Naive thymus-derived CD4-positive, alpha-beta T cell (primary cell): ENCODE measurements at regions of chr14 and their contacts with region 1.

Region 1: GRCh38 chr14:91510174-91511042 is at the start of gene PPP4R3A:
- DNase-seq: peak; percentile 86 to 96 (median 95)
- ATAC-seq: peak; percentile 92
- H3K4me3 ChIP-seq: peak within 1 kb of the TSS; percentile 62
- H3K4me3 Mint-ChIP-seq: peak within 1 kb of the TSS; percentile 93 to 100 (median 98)
- H3K27ac ChIP-seq: peak within 1 kb of the TSS; percentile 99
- H3K27ac Mint-ChIP-seq: peak within 1 kb of the TSS; percentile 100
- H3K4me1 ChIP-seq: peaks cover 14 to 22% of the 10 kb centered on the region in 2 donors
- H3K4me1 Mint-ChIP-seq: peaks cover 15 to 38% (median 32%) of the 10 kb centered on the region in 7 donors
- H3K27me3 ChIP-seq: no peaks in the 10 kb centered on the region
- H3K27me3 Mint-ChIP-seq: no peaks in the 10 kb centered on the region
- total RNA-seq, gene PPP4R3A: 129 to 214 (median 167) TPM

Region 2: DNA sequence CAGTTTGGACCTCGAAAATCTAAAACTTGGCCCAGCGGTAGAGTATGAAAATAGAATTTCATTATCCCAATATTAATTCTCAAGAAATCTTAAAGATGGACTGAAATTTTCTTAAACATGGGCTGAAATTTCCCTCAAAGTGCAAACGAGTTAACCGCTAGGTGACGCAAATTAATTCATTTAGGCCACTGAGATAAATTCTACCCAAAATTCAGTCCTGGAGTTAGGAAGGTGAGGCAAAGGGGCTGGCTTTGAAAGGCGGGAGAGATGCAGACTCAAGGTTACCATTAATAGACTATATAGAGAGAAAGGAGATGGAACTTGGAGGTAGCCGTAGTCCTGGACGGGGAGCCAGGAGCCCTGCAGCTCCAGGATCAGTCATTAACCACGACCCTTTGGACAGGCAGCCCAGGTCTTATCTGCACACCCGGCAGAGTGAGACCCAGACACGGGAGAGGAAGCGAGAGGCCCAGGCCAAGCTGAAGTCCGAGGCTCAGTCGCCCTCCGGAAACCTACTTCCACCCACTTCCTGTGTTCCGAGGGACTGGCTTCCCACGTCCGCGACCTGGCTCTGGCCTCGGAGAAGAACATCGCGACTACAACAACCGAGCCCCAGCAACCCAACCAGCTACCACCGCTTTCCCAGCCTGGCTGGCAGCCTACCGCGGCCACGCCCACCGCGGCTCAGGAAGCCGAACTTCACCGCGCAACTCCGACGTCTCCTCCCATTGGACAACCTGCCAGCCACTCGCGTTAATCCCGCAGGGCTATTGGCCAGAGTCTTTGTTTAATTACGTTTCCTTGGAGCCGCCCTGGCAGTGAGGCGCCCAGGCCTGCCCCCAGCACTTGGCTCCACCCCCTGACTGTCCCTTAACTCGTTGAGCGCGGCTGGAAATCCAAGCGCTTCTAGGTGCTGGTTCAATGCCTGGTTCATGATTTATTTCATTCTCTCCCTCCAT is 1556.1 kb before region 1 on chr14 and contains the start of gene EFCAB11:
- CTCF ChIA-PET with region 1: no interaction called
- POLR2A ChIA-PET with region 1: no interaction called
- intact Hi-C with region 1: loop called in 1 of 2 experiments (anchors 10 kb)
- DNase-seq: peak; percentile 80 to 98 (median 97)
- ATAC-seq: peak; percentile 90
- H3K4me3 ChIP-seq: peak within 1 kb of the TSS; percentile 72
- H3K4me3 Mint-ChIP-seq: peak within 1 kb of the TSS; percentile 74 to 98 (median 94)
- H3K27ac ChIP-seq: peak within 1 kb of the TSS; percentile 94
- H3K27ac Mint-ChIP-seq: peak within 1 kb of the TSS; percentile 82 to 98 (median 91)
- H3K4me1 ChIP-seq: peaks cover 16 to 21% of the 10 kb centered on the region in 2 donors
- H3K4me1 Mint-ChIP-seq: peaks cover 21 to 54% (median 43%) of the 10 kb centered on the region in 7 donors
- H3K27me3 ChIP-seq: no peaks in the 10 kb centered on the region
- H3K27me3 Mint-ChIP-seq: no peaks in the 10 kb centered on the region
- total RNA-seq, gene EFCAB11: 1.2 to 8.5 (median 1.9) TPM

Region 3: GRCh38 chr14:90758028-90758889 is 752.1 kb before region 1 on chr14:
- CTCF ChIA-PET with region 1: interaction called, 3 read pairs
- POLR2A ChIA-PET with region 1: no interaction called
- intact Hi-C with region 1: loop called in 1 of 2 experiments (anchors 1 kb)
- DNase-seq: peak; percentile 83 to 98 (median 92)
- ATAC-seq: peak; percentile 94
- H3K4me3 ChIP-seq: peak overlapping the region; percentile 79
- H3K4me3 Mint-ChIP-seq: peak overlapping the region; percentile 75 to 92 (median 86)
- H3K27ac ChIP-seq: peak overlapping the region; percentile 75
- H3K27ac Mint-ChIP-seq: peak overlapping the region; percentile 80 to 95 (median 90)
- H3K4me1 ChIP-seq: peaks cover 7 to 21% of the 10 kb centered on the region in 2 donors
- H3K4me1 Mint-ChIP-seq: peaks cover 12 to 29% (median 23%) of the 10 kb centered on the region in 7 donors
- H3K27me3 ChIP-seq: no peaks in the 10 kb centered on the region
- H3K27me3 Mint-ChIP-seq: peaks cover 0 to 33% (median 6%) of the 10 kb centered on the region in 5 donors

Region 4: DNA sequence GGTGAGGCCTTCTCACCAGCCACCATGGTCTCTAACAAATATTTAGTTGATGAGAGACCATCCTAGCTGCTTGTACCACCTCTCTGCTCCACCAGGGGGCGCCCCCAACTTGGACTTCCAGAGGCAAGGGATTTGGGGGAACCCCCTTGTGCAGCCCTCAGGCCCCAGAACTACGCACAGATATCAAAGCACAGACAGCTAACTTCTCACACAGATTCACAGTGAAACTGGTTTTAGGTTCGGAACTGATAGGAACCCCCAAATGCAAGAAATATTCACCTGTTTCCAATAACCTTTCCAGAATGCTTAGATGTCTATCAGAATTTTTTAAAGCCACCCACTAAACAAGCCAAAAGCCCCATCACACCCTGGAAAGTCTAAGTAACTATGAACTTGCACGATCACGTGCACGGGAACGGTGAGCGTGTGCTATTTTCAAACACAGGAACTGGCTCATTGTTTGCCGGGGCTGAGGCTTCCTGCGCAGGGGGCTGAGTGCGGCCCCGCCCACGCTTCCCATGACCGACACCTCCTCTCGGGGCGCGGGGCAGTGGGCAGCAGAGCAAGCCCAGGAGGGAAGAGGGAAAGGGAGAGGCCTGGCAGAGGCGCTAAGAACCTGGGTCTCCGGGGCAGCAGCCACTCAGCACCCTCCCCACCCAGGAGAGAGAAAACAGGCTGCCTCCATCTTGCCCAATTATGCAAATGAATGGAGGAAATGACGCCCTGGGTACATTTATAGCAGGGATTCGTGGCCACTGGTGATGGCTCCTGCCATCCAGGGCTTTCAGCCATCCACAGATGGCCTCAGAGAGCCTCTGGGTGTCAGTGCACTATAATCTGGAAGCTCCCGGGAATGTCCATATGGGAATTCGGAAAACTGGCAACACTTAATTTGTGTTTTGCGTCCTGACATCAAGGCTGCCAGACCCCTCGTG is 186.5 kb before region 1 on chr14:
- CTCF ChIA-PET with region 1: no interaction called
- POLR2A ChIA-PET with region 1: interaction called, 5 read pairs
- intact Hi-C with region 1: loop called in 1 of 2 experiments (anchors 5 kb)
- DNase-seq: peak; percentile 90 to 95 (median 92)
- ATAC-seq: peak; percentile 94
- H3K4me3 ChIP-seq: peak overlapping the region; percentile 39
- H3K4me3 Mint-ChIP-seq: peak overlapping the region; percentile 77 to 98 (median 84)
- H3K27ac ChIP-seq: peak overlapping the region; percentile 81
- H3K27ac Mint-ChIP-seq: peak overlapping the region; percentile 94 to 100 (median 99)
- H3K4me1 ChIP-seq: peaks cover 48 to 60% of the 10 kb centered on the region in 2 donors
- H3K4me1 Mint-ChIP-seq: peaks cover 52 to 91% (median 82%) of the 10 kb centered on the region in 7 donors
- H3K27me3 ChIP-seq: no peaks in the 10 kb centered on the region
- H3K27me3 Mint-ChIP-seq: no peaks in the 10 kb centered on the region

Region 5: DNA sequence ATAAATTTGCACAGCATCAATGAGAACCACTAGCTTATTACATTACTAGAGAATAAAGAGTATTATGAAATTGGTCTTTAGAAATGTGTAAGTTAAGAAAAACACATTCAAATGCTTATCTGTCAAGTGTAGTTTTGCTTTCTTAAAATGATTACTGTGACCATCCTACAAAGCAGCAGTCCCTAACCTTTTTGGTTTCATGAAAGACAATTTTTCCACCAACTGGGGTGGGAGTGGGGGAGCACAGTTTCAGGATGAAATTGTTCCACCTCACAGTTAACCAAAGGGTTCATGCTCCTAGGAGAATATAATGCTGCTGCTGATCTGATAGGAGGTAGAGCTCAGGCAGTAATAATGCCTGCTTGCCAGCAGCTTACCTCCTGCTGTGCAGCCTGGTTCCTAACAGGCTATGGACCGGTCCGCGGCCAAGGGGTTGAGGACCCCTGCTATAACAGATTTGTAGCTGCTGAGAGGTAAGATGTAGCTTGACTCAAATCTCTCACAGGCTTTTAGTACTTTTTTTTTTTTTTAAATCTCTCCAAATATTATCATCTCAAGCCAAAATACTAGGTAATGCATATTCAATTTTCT is 45.7 kb before region 1 on chr14:
- CTCF ChIA-PET with region 1: no interaction called
- POLR2A ChIA-PET with region 1: no interaction called
- intact Hi-C with region 1: no loop called
- DNase-seq: no peak
- ATAC-seq: no peak
- H3K4me3 ChIP-seq: no peak overlapping the region
- H3K4me3 Mint-ChIP-seq: no peak overlapping the region
- H3K27ac ChIP-seq: no peak overlapping the region
- H3K27ac Mint-ChIP-seq: peak overlapping the region in 5 of 9 donors; percentile 13 to 77 (median 56)
- H3K4me1 ChIP-seq: no peaks in the 10 kb centered on the region
- H3K4me1 Mint-ChIP-seq: peaks cover 4 to 14% (median 9%) of the 10 kb centered on the region in 7 donors
- H3K27me3 ChIP-seq: no peaks in the 10 kb centered on the region
- H3K27me3 Mint-ChIP-seq: no peaks in the 10 kb centered on the region

Region 6: DNA sequence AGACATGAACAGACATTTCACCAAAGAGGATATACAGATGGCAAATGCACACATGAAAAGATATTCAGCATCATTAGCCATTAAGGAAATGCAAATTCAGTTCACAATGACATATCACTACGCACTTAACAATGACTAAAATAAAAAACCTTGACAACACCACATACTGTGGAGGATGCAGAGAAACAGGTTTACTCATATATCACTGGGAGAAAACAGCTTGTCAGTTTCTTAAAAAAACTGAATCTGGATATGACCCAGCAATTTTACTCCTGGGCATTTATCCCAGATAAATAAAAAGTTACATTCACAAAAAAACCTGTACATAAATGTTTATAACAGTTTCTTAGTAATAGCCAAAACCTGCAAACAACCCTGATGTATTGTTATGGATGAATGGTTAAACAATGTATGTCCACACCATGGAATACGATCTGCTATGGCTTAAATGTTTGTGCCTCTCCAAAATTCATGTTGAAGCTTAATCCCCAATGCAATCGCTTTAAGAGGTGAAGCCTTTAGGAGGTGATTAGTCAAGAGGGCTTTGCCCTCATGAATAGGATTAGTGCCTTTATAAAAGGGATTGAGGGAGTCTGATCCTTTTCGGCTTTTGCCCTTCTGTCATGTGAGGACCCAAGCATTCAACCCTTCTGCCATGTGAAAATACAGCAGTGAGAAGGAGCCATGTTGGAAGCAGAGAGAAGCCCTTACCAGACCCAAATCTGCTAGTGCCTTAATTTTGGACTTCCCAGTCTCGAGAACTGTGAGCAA is 35.7 kb after region 1 on chr14:
- CTCF ChIA-PET with region 1: no interaction called
- POLR2A ChIA-PET with region 1: no interaction called
- intact Hi-C with region 1: no loop called
- DNase-seq: no peak
- ATAC-seq: no peak
- H3K4me3 ChIP-seq: no peak overlapping the region
- H3K4me3 Mint-ChIP-seq: no peak overlapping the region
- H3K27ac ChIP-seq: no peak overlapping the region
- H3K27ac Mint-ChIP-seq: no peak overlapping the region
- H3K4me1 ChIP-seq: no peaks in the 10 kb centered on the region
- H3K4me1 Mint-ChIP-seq: no peaks in the 10 kb centered on the region
- H3K27me3 ChIP-seq: no peaks in the 10 kb centered on the region
- H3K27me3 Mint-ChIP-seq: peaks cover 0 to 20% (median 6%) of the 10 kb centered on the region in 5 donors

Region 7: DNA sequence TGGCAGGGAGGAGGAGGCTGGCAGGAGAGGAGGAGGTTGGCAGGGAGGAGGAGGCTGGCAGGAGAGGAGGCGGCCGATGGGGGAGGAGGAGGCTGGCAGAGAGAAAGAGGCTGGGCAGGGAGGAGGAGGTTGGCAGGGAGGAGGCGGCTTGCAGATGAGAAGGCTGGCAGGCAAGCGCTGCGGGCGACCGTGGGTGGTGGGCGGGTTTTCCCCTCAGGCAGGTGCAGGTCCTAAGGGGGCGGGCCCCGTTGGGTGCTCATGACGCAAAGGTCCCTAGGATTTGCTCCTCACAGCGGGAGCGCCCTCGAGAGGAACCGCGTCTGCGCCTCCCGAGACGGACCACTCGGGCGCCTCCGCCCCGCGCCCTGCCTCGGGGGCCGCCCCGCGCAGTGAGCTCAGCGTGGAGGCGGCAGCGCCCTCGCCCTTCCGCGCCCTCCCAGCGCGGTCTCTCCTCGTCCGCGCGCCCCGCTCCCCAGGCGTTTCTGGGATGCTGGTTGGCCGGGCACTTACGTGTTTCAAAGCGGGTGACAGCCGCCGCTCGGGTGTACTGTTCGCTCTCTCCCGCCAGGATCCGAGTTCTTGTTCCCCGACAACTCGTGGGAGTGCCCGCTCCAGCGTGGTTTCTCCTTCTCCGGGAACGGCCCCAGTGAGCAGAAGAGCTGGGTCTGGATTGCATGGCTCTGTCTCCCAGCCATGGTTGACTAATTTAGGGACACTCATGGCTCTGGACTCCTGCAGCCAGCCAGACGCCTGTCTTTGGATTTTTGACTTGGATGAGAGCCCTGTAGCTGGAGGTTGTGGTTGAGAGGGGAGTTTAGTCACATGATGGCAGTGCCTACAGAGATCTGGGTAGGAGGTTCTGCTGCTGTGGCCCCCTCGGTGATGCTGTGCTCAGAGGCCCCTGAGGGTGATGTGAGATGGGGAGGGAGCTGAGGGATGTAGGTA is 63.8 kb after region 1 on chr14:
- CTCF ChIA-PET with region 1: no interaction called
- POLR2A ChIA-PET with region 1: no interaction called
- intact Hi-C with region 1: loop called in 1 of 2 experiments (anchors 2 kb)
- DNase-seq: peak; percentile 39 to 85 (median 48)
- ATAC-seq: peak; percentile 90
- H3K4me3 ChIP-seq: peak overlapping the region; percentile 64
- H3K4me3 Mint-ChIP-seq: peak overlapping the region; percentile 68 to 89 (median 82)
- H3K27ac ChIP-seq: no peak overlapping the region
- H3K27ac Mint-ChIP-seq: peak overlapping the region in 5 of 9 donors; percentile 36 to 65 (median 46)
- H3K4me1 ChIP-seq: peaks cover 0 to 4% of the 10 kb centered on the region in 2 donors
- H3K4me1 Mint-ChIP-seq: peaks cover 8 to 14% (median 12%) of the 10 kb centered on the region in 7 donors
- H3K27me3 ChIP-seq: no peaks in the 10 kb centered on the region
- H3K27me3 Mint-ChIP-seq: peaks cover 0 to 30% (median 10%) of the 10 kb centered on the region in 5 donors

Region 8: DNA sequence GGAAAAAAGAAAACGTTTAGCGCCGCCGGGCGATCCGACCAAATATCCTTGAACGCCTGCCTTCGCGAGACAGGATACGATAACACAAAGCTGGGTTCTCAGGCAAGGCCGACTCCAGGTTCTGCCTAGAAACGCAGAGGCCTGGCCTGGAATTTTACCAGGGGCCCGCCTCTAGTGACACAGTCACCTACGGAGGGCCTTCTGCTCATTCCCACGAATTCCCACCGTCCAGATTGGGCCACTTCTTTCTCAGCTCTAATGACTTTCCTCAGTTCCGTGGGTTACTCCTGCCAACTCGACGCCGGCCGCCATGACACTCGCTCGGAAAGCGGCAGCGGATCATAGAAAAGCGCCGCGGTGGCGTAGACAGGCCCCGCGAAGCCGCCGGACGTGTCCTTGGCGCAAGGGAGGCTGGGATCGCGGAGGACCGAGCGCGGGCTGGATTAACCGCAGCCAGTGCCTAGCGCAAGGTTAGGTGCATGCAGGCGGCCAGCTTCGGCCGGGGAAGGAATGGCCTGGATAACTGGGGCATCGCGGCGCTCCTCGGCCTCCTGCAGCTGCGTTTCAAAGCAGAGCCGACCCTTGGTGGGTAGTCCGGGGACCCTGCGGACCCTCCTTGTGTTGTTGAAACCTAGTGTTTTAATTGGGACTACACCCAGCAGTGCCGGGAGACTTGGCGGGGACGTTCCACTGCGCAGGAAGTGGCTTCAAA is 529.5 kb after region 1 on chr14 and contains the start of gene TRIP11:
- CTCF ChIA-PET with region 1: no interaction called
- POLR2A ChIA-PET with region 1: interaction called, 13 read pairs
- intact Hi-C with region 1: loop called (anchors 1 kb)
- DNase-seq: peak; percentile 88 to 97 (median 94)
- ATAC-seq: peak; percentile 96
- H3K4me3 ChIP-seq: peak within 1 kb of the TSS; percentile 86
- H3K4me3 Mint-ChIP-seq: peak within 1 kb of the TSS; percentile 91 to 99 (median 96)
- H3K27ac ChIP-seq: peak within 1 kb of the TSS; percentile 84
- H3K27ac Mint-ChIP-seq: peak within 1 kb of the TSS in 7 of 9 donors; percentile 96 to 100 (median 98)
- H3K4me1 ChIP-seq: peaks cover 20 to 21% of the 10 kb centered on the region in 2 donors
- H3K4me1 Mint-ChIP-seq: peaks cover 6 to 50% (median 35%) of the 10 kb centered on the region in 7 donors
- H3K27me3 ChIP-seq: no peaks in the 10 kb centered on the region
- H3K27me3 Mint-ChIP-seq: no peaks in the 10 kb centered on the region
- total RNA-seq, gene TRIP11: 34.1 to 72.4 (median 58.4) TPM

Region 9: DNA sequence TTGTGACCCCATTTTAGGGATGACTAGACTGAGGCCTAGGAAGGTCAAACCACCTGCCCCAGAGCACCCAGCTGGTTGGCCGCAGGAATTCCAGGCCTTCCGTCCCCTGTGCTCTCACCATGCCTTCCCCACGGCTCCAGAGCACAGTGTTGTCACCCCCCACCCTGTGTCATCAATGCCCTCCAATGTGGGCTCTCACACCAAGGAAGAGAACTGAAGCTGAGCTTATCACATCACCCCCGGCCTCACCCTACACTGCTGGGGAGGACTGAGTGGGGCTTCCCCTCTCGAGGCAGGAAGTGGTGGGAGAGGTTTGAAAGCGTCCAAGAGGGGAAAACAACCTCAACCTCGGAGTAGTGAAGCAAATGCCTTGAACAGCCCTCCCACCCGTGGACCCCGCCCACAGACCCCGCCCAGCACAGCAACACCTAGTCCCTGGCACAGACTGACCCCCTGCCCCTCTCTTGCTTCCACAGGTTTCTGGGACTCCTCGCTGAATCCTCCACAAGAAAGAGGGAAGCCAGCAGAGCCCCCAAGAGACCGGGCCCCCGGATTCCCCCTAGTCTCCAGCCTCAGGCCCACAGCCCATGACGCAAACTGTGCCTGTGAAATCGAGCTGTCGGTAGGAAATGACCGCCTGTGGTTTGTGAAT is 1140.8 kb after region 1 on chr14:
- CTCF ChIA-PET with region 1: no interaction called
- POLR2A ChIA-PET with region 1: no interaction called
- intact Hi-C with region 1: loop called in 1 of 2 experiments (anchors 2 kb)
- DNase-seq: peak; percentile 50 to 91 (median 87)
- ATAC-seq: peak; percentile 89
- H3K4me3 ChIP-seq: peak overlapping the region; percentile 82
- H3K4me3 Mint-ChIP-seq: peak overlapping the region; percentile 99 to 100 (median 100)
- H3K27ac ChIP-seq: peak overlapping the region; percentile 90
- H3K27ac Mint-ChIP-seq: peak overlapping the region; percentile 94 to 100 (median 99)
- H3K4me1 ChIP-seq: peaks cover 57 to 58% of the 10 kb centered on the region in 2 donors
- H3K4me1 Mint-ChIP-seq: peaks cover 65 to 82% (median 70%) of the 10 kb centered on the region in 7 donors
- H3K27me3 ChIP-seq: no peaks in the 10 kb centered on the region
- H3K27me3 Mint-ChIP-seq: no peaks in the 10 kb centered on the region